Activated CD4-positive, alpha-beta T cell treated with anti-CD3 and anti-CD28 coated beads for 36 hours (primary cell): ENCODE measurements at regions of chr9 and their contacts with region 1.

Region 1: DNA sequence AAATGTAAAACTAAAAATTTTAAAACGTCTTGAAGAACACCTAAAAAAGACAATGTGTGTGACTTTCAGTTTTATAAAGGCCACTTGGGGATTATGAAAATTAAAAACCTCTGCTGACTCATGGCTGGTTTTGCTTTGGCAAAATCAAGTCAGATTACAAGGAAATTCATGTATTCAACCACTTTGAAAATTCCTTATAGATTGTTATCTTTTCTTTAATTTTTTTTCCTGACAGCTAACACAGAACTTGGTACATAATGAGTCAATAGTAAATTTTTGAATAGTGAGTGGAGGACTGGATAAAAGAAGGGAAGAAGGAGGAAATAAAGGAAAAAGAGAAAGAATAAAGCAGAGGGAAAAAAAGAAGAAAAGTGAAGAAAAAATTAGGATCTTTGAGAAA is 1774.7 kb upstream of the ACO1 start:
- DNase-seq: no peak
- ATAC-seq: no peak
- H3K4me3 Mint-ChIP-seq: no peak overlapping the region
- H3K27ac Mint-ChIP-seq: no peak overlapping the region
- H3K4me1 Mint-ChIP-seq: no peaks in the 10 kb centered on the region
- H3K27me3 Mint-ChIP-seq: no peaks in the 10 kb centered on the region

Region 2: DNA sequence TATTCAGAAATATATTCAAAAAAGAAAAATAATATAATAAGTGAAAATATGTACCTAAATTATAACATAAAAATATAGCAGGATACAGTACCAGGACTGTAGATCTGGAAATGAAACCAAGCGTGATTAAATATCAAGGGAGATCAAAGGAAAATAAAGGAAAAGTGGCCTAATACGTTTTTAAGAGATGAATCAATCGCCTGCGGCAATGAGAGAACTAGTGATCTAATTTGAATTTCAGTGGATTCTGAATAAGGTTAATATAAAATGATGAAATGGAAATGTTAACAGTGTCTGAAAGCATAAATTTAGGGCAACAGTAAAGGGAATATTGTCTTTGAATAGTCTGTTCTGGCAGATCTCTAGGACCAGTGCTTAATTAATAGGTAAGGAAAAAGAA is 12.8 kb after region 1 on chr9:
- CTCF ChIA-PET with region 1: no interaction called
- POLR2A ChIA-PET with region 1: no interaction called
- intact Hi-C with region 1: loop called in 1 of 2 experiments (anchors 1 kb)
- DNase-seq: no peak
- ATAC-seq: no peak
- H3K4me3 Mint-ChIP-seq: no peak overlapping the region
- H3K27ac Mint-ChIP-seq: no peak overlapping the region
- H3K4me1 Mint-ChIP-seq: no peaks in the 10 kb centered on the region
- H3K27me3 Mint-ChIP-seq: no peaks in the 10 kb centered on the region

Region 3: DNA sequence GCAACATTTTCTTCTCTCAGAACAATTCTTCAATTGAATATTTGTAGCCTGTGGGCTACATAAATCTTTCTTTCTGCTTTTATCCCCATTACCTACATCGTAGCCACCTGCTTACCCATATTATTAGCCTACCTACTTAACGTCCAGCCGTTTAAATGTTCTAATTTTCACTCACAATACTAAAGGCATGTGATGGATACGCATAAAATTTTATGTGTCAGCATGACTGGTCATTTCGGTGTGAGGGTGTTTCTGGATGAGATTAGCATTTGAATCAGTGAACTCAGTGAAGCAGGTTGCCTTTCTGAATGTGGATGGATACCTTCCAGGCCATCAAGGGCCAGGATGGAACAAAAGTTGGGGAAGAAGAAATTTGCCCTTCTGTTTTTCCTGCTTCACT is 52.2 kb after region 1 on chr9:
- CTCF ChIA-PET with region 1: no interaction called
- POLR2A ChIA-PET with region 1: no interaction called
- intact Hi-C with region 1: loop called in 1 of 2 experiments (anchors 10 kb)
- DNase-seq: no peak
- ATAC-seq: no peak
- H3K4me3 Mint-ChIP-seq: no peak overlapping the region
- H3K27ac Mint-ChIP-seq: no peak overlapping the region
- H3K4me1 Mint-ChIP-seq: no peaks in the 10 kb centered on the region
- H3K27me3 Mint-ChIP-seq: no peaks in the 10 kb centered on the region

Region 4: GRCh38 chr9:31390356-31391025 is 780.8 kb after region 1 on chr9:
- CTCF ChIA-PET with region 1: no interaction called
- POLR2A ChIA-PET with region 1: no interaction called
- intact Hi-C with region 1: no loop called
- DNase-seq: no peak
- ATAC-seq: peak; percentile 58
- H3K4me3 Mint-ChIP-seq: no peak overlapping the region
- H3K27ac Mint-ChIP-seq: no peak overlapping the region
- H3K4me1 Mint-ChIP-seq: peaks cover 9% of the 10 kb centered on the region
- H3K27me3 Mint-ChIP-seq: no peaks in the 10 kb centered on the region